ENCODE measurements at regions of chr1 and their contacts with region 1.

Region 1: DNA sequence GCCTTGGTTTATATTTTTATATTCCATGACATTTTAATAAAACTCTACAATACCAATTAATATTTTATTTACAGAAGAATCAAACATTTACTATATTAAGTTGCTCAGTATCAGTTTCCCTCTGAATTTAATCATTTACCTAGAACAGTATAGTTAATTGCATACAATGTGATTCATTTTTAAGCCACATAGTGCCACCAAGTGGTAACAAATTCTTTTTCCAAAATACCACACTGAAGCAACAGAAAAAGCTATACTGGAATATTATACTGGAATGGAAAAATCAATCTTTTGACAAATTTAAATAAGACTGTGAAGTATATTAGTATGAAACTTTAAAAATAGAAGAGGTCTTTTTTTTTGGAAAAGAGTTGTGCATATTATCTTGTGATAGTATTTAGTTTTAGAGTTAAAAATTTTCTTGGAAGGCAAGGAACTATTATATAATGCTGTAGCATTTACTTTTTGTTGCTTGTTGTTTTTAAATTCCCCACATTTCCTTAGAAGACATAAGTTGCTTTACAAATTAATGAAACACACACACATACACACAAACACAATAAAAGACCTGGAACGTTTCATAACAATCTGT is 57.3 kb downstream of the ZNF644 start:
- DNase-seq: no peak
- H3K4me3 Mint-ChIP-seq: no peak overlapping the region
- H3K27ac Mint-ChIP-seq: no peak overlapping the region
- H3K4me1 Mint-ChIP-seq: peaks cover 38% of the 10 kb centered on the region
- H3K27me3 Mint-ChIP-seq: no peaks in the 10 kb centered on the region

Region 2: DNA sequence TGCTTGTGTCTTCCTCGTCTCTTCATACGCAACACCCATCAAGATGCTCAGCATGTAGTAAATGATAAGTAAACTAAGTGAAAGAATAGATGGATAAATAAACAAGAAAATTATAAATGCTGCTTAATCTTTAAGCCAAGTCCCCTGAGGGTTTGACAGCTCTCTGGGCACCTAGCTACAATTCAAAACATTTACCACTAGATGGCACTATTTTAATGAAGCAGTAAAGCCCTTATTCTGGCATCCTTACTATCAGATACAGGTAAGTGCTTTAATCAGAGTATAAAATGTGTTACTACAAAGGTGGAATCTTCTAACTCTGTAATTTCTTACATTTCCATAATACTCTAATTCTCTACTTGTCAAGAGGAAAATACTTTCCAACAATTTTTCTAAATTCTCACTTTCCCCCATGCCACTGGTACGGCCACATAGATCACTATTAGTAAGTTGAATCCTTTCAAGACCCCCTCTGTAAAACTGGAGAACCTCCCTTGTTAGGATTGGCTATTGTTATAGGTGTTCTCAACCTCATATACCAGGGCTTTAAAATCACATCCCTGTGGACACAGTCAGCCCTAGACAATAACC is 385.2 kb before region 1 on chr1:
- CTCF ChIA-PET with region 1: interaction called, 4 read pairs
- POLR2A ChIA-PET with region 1: no interaction called
- intact Hi-C with region 1: loop called (anchors 5 kb)
- DNase-seq: no peak
- H3K4me3 Mint-ChIP-seq: no peak overlapping the region
- H3K27ac Mint-ChIP-seq: no peak overlapping the region
- H3K4me1 Mint-ChIP-seq: no peaks in the 10 kb centered on the region
- H3K27me3 Mint-ChIP-seq: no peaks in the 10 kb centered on the region

Region 3: DNA sequence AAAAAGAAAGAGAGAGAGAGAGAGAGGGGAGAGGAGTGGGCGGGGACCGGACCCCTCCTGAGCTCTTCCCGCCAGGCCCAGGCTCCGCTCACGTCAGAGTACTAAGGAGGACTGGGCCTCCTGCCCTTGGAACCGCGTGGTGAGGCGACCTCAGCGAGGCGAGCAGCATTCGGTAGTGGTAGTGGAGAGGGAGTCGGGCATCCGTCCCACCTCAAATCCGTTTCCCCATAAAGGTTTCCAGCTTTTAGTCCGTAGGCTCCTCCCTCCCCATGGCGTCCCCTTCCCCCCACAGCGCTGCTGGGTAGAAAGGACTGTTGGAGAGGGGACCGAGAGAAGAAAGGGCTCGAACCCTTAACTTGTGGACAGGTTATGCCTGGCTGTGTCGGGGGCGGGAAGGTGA is 123.1 kb before region 1 on chr1:
- CTCF ChIA-PET with region 1: no interaction called
- POLR2A ChIA-PET with region 1: no interaction called
- intact Hi-C with region 1: loop called (anchors 10 kb)
- DNase-seq: no peak
- H3K4me3 Mint-ChIP-seq: no peak overlapping the region
- H3K27ac Mint-ChIP-seq: no peak overlapping the region
- H3K4me1 Mint-ChIP-seq: peaks cover 11% of the 10 kb centered on the region
- H3K27me3 Mint-ChIP-seq: peaks cover 71% of the 10 kb centered on the region

Region 4: DNA sequence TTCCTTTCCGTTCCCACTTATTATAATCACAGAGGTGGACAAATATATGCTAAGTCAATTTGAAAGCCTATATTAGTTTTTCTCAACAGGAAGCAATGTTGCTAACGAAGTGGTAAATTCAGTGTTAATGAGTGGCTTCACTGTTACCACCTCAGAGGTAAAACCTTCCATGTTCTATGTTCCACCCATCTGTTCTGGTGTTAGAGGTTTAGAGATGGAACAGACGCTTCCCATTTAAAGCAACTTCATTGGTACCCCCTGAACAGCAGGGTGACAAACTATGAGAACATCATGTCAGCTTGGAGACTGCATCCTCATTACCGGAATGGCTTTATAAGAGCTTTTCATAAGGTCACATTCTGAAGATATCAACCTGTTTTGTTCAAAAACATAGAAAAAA is 20.6 kb before region 1 on chr1:
- CTCF ChIA-PET with region 1: no interaction called
- POLR2A ChIA-PET with region 1: no interaction called
- intact Hi-C with region 1: no loop called
- DNase-seq: no peak
- H3K4me3 Mint-ChIP-seq: no peak overlapping the region
- H3K27ac Mint-ChIP-seq: no peak overlapping the region
- H3K4me1 Mint-ChIP-seq: peaks cover 18% of the 10 kb centered on the region
- H3K27me3 Mint-ChIP-seq: no peaks in the 10 kb centered on the region

Measured in activated CD4-positive, alpha-beta memory T cell treated with anti-CD3 and anti-CD28 coated beads for 36 hours (primary cell).